Activated B cell treated with CpG ODN at 0.5 μM for 24 hours (primary cell): ENCODE measurements at regions of chr14 and their contacts with region 1.

Region 1: DNA sequence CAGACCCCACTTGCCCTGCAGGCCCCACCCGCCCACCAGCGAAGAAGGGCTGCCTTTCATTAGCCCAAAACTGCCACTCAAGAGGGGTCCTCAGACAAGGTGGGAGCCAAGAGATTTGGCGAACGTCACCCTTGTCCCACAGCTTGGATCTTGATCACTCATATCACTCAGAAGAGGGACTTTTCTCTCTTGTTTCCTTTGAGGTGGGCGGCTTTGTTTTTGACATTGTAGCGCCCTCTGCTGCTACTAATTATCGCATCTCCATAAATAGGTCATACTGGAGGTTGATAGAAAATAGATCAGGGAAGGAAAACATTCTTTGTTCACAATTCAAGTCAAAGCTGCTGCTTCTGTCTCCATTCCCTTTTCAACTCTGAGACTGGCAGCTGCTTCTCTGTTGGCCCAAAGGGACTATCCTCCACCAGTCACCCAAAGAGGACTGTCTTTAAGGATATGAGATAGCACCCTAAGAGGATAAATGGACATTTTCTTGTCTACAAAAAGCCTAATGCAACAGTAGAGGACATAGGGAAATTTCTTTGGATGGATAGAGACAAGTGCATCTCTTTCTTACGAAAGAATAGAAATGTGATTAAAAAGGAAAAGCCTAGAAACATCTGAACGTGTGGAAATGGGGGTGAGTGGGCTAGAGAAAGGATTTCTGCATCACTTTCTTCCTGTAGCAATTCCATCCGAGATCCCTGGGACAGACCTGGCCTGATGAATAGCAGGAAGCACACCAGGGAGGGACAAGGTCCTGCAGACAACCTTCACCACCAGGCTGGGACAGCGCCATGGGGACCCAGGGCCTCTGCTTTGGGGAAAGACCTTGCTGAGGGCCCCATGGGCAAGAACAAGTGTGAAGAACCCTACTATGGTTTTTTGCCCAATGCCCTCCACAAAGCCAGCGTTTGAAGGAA is 115.8 kb downstream of the DAD1 start:
- DNase-seq: no peak
- ATAC-seq: peak; percentile 64
- H3K4me3 Mint-ChIP-seq: peak overlapping the region; percentile 3
- H3K27ac Mint-ChIP-seq: peak overlapping the region; percentile 65
- H3K4me1 Mint-ChIP-seq: peaks cover 89% of the 10 kb centered on the region
- H3K27me3 Mint-ChIP-seq: no peaks in the 10 kb centered on the region
- CTCF ChIP-seq: peak; percentile 40

Region 2: DNA sequence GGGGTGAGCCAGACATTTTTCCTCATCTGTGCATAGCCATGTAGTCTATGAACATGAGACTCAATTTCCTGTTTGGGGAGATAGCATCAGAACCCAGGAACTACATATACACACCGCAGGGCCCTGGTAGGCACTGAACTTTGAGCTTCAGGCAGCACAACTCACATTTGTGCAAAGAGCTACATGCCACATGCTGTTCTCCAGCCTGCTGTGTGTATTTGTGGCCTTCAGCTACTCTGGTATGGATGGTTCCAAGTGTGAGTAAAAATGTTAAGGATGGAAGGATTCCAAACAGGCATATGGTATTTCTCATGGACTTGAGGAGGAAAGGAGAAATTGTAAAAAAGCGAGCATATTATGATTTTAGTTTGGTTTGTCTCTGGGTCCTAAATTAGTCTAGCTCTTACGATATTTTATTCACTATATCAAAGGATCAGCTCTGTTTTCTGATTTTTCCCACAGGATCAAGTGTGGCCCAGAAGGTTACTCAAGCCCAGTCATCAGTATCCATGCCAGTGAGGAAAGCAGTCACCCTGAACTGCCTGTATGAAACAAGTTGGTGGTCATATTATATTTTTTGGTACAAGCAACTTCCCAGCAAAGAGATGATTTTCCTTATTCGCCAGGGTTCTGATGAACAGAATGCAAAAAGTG is 377.2 kb before region 1 on chr14:
- CTCF ChIA-PET with region 1: no interaction called
- POLR2A ChIA-PET with region 1: no interaction called
- intact Hi-C with region 1: no loop called
- DNase-seq: no peak
- ATAC-seq: no peak
- H3K4me3 Mint-ChIP-seq: no peak overlapping the region
- H3K27ac Mint-ChIP-seq: no peak overlapping the region
- H3K4me1 Mint-ChIP-seq: no peaks in the 10 kb centered on the region
- H3K27me3 Mint-ChIP-seq: peaks cover 30% of the 10 kb centered on the region
- CTCF ChIP-seq: no peak

Region 3: GRCh38 chr14:22319526-22320361 is 153.5 kb before region 1 on chr14:
- CTCF ChIA-PET with region 1: interaction called, 30 read pairs
- POLR2A ChIA-PET with region 1: no interaction called
- intact Hi-C with region 1: loop called (anchors 1 kb)
- DNase-seq: no peak
- ATAC-seq: peak; percentile 77
- H3K4me3 Mint-ChIP-seq: no peak overlapping the region
- H3K27ac Mint-ChIP-seq: no peak overlapping the region
- H3K4me1 Mint-ChIP-seq: no peaks in the 10 kb centered on the region
- H3K27me3 Mint-ChIP-seq: peaks cover 4% of the 10 kb centered on the region
- CTCF ChIP-seq: no peak

Region 4: GRCh38 chr14:22420598-22421186 is 52.5 kb before region 1 on chr14:
- CTCF ChIA-PET with region 1: interaction called, 15 read pairs
- POLR2A ChIA-PET with region 1: no interaction called
- intact Hi-C with region 1: no loop called
- DNase-seq: no peak
- ATAC-seq: no peak
- H3K4me3 Mint-ChIP-seq: no peak overlapping the region
- H3K27ac Mint-ChIP-seq: no peak overlapping the region
- H3K4me1 Mint-ChIP-seq: peaks cover 31% of the 10 kb centered on the region
- H3K27me3 Mint-ChIP-seq: no peaks in the 10 kb centered on the region
- CTCF ChIP-seq: no peak

Region 5: GRCh38 chr14:22448905-22449599 is 24.1 kb before region 1 on chr14:
- CTCF ChIA-PET with region 1: interaction called, 4 read pairs
- POLR2A ChIA-PET with region 1: interaction called, 6 read pairs
- intact Hi-C with region 1: loop called (anchors 1 kb)
- DNase-seq: no peak
- ATAC-seq: peak; percentile 58
- H3K4me3 Mint-ChIP-seq: peak overlapping the region; percentile 3
- H3K27ac Mint-ChIP-seq: peak overlapping the region; percentile 78
- H3K4me1 Mint-ChIP-seq: peaks cover 23% of the 10 kb centered on the region
- H3K27me3 Mint-ChIP-seq: no peaks in the 10 kb centered on the region
- CTCF ChIP-seq: no peak

Region 6: GRCh38 chr14:22483863-22484593 is 10.8 kb after region 1 on chr14:
- CTCF ChIA-PET with region 1: interaction called, 32 read pairs
- POLR2A ChIA-PET with region 1: interaction called, 27 read pairs
- intact Hi-C with region 1: no loop called
- DNase-seq: no peak
- ATAC-seq: peak; percentile 59
- H3K4me3 Mint-ChIP-seq: peak overlapping the region; percentile 73
- H3K27ac Mint-ChIP-seq: peak overlapping the region; percentile 85
- H3K4me1 Mint-ChIP-seq: peaks cover 97% of the 10 kb centered on the region
- H3K27me3 Mint-ChIP-seq: no peaks in the 10 kb centered on the region
- CTCF ChIP-seq: no peak

Region 7: GRCh38 chr14:22689186-22689585 is 216.0 kb after region 1 on chr14:
- CTCF ChIA-PET with region 1: no interaction called
- POLR2A ChIA-PET with region 1: no interaction called
- intact Hi-C with region 1: no loop called
- DNase-seq: no peak
- ATAC-seq: no peak
- H3K4me3 Mint-ChIP-seq: no peak overlapping the region
- H3K27ac Mint-ChIP-seq: no peak overlapping the region
- H3K4me1 Mint-ChIP-seq: no peaks in the 10 kb centered on the region
- H3K27me3 Mint-ChIP-seq: peaks cover 41% of the 10 kb centered on the region
- CTCF ChIP-seq: no peak